Posterior vena cava (tissue), 2 donors: ENCODE measurements at regions of chr4 and their contacts with region 1.

Region 1: DNA sequence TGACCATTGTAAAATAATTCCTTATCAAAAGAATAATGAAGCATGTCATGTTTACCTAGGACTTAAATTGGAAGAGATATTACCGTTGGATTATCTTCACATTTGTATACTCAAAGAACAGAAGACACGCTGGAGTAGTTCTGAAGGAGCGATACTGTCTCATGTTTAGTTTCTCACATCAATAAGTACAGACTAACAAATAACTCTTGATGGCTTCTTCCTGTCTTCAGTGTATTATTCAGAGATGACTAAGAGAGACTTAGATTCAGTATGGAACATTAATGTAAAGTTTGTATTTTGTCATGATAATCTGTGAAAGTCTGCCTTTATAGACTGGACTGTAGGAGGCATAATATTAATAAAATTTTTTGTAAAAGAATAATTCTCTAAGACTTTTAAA is 72.7 kb downstream of the SPRY1 start:
- DNase-seq: no peak

Region 2: GRCh38 chr4:122865425-122865824 is 603.8 kb before region 1 on chr4:
- intact Hi-C with region 1: loop called in 1 of 2 experiments (anchors 5 kb)
- DNase-seq: no peak